AG04449 (cell line): ENCODE measurements at regions of chr16 and their contacts with region 1.

Region 1: DNA sequence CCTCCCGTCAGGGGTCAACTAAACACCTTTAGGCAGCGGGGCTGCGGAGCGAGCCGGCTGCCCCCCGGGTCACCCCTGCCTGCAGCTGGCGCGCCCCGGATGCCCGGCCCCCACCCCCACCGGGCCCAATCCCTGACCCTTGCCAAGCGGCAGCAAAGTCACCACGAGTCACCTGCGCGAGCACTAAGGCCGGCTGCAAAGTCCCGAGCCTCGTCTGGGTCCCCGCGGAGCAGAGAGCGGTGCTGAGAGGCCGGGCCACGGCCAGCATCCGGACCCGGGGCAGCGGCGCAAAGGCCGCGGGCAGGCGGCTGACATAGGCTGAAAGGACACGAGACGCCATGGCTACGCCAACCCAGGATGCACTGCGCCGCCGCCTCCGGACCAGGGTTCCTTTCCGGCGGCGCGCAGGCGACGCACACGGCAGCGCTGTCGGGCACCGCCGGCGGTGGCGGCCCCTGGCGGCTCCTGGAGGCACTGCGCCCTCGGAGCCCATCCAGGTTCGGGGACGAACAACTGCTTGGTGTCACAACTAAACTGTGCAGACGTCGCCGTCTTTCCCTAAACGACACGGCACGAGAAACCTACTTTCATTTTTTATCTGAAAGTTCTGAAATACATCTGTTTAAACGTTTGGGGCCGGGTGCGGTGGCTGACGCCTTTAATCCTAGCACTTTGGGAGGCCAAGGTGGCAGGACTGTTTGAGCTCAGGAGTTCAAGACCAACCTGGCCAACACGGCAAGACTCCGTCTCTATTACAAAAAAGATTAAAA is at the start of gene NDUFAB1:
- DNase-seq: no peak
- H3K4me3 ChIP-seq: peak within 1 kb of the TSS; percentile 95
- CTCF ChIP-seq: peak; percentile 88

Region 2: DNA sequence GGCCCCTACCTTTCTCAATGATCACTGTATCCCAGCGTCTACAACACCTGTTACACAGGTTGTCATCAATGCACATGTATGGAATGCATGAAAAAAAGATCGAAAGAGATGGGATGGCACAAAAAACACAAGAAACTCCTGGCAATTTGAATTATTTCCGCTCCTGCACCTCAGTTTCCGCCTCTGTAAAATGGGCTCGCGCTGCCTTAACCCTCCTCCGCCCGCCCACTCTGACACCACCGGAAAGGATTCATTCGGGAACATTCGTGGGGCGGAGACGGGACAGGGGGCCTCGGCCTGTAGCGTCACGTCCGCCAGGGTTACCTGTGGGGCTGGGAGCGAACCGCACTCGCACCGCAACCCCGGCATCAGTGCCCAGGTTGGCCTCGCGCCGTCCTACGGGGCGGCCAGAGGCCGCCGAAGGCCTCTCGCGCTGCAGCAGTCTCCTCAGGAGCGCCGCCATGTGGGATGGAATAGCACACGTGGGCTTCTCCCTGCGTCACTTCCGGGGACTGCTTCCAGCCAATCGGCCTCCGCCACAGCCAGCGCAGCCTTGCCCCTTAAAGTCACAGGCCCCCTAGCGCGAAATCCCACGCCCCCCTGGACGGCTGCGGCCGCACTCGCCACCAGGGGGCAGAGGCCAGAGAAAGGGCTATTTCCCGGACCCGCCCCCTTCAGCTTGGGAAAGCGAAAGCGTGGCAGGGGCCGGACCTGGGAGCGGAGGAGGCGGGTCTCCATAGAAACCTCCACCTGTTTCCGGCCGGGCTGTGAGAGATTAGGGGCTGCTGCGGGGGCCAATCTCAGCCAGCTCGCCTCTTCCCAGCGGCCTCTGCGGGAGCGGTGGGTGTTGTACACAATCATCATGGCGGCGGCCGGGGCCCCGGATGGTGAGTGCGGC is 39.0 kb before region 1 on chr16 and contains the starts of genes EARS2 and UBFD1:
- CTCF ChIA-PET with region 1: interaction called, 17 read pairs
- POLR2A ChIA-PET with region 1: no interaction called
- DNase-seq: peak; percentile 93
- H3K4me3 ChIP-seq: peak within 1 kb of the TSS; percentile 96
- CTCF ChIP-seq: peak; percentile 92

Region 3: DNA sequence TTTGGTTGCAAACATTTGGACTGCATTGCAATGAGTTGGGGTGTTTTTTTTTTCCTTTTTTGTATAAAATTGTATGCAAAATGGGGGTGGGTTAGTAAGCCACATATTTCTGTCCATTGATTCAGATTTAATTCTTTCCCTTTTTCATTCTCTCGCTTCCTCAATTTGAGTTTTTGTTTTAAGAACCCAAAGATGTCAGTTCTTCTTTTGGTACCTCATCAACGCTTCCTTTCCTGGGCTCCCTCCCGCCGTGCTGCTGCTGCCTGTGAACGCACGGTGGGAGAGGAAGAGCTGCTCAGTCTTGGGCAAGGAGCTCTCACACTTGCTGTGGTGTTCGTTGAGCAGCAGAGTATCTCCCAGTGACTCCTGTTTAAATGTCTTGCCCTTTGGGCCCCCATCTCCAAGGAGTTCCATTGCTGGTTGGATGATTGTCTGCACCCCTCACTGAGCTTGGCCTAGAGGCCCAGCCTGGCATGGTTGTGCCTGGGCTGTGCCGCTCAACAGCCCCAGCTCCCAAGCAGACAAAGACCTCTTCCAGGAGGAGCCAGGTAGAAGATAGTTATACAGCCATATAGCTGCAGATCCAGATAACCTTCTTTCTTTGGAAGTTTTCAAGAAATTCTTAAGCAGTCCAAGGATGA is 25.0 kb before region 1 on chr16:
- CTCF ChIA-PET with region 1: interaction called, 11 read pairs
- POLR2A ChIA-PET with region 1: no interaction called
- DNase-seq: no peak
- H3K4me3 ChIP-seq: no peak overlapping the region
- CTCF ChIP-seq: no peak

Region 4: GRCh38 chr16:23581764-23582163 is 14.4 kb before region 1 on chr16:
- CTCF ChIA-PET with region 1: interaction called, 18 read pairs
- POLR2A ChIA-PET with region 1: no interaction called
- DNase-seq: no peak
- H3K4me3 ChIP-seq: no peak overlapping the region
- CTCF ChIP-seq: no peak

Region 5: GRCh38 chr16:23608194-23608593 is 12.1 kb after region 1 on chr16:
- CTCF ChIA-PET with region 1: interaction called, 25 read pairs
- POLR2A ChIA-PET with region 1: no interaction called
- DNase-seq: no peak
- H3K4me3 ChIP-seq: no peak overlapping the region
- CTCF ChIP-seq: no peak

Region 6: GRCh38 chr16:23615805-23616204 is 19.7 kb after region 1 on chr16:
- CTCF ChIA-PET with region 1: interaction called, 25 read pairs
- POLR2A ChIA-PET with region 1: no interaction called
- DNase-seq: no peak
- H3K4me3 ChIP-seq: no peak overlapping the region
- CTCF ChIP-seq: no peak

Region 7: GRCh38 chr16:23640931-23641765 is 45.0 kb after region 1 on chr16 and contains the starts of genes DCTN5 and PALB2:
- CTCF ChIA-PET with region 1: interaction called, 10 read pairs
- POLR2A ChIA-PET with region 1: no interaction called
- DNase-seq: peak; percentile 51
- H3K4me3 ChIP-seq: peak within 1 kb of the TSS; percentile 99
- CTCF ChIP-seq: no peak